ENCODE measurements at regions of chr2 and their contacts with region 1.

Region 1: DNA sequence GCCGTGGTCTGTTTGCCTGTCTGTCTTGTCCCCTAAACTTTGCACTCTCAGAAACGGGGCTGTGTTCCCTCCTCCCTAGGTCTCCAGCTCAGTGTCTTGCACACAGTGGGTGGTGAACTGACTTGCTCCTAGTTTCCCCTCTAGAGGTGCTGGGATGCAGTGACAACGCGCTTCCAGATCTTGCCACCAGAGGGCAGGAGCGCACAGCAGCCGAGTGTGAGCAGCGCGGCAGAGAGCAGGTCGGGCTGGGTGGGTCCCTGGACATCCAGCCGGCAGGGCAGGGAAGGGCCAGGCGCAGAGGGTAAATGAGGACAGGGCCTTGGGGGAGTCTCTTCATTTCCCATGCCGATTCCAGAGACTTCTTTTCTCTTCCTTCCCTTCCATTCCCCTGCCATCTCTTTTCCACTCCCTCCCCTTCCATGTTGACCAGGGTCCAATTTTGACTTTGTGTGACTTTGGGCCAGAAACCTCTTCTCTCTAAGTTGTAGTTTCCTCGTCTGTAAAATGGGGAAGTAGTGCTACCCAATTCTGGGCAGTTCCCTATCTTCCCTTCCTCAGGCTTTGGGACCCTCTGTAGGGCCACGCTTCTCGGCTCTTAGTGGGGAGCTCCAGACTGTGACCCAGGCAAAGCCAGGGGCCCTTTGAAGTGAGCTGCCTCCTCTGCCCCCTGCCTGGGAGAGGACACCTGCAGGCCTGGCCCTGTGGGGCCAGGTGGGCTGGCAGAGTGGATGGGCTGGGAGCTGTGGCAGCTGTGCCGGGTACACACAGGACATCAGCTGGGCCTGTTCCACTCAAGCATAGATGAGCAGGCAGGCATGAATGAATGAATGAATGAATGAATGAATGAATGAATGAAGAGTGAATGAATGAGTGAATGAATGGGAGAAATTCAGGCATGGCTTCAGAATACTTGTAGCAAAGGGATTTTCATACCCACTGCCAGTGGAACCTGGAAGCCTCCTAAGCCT is 43.3 kb upstream of the TAF1B start:
- DNase-seq: peak; percentile 91
- ATAC-seq: peak; percentile 96
- H3K4me3 Mint-ChIP-seq: peak overlapping the region; percentile 60
- H3K27ac Mint-ChIP-seq: peak overlapping the region; percentile 88
- H3K4me1 Mint-ChIP-seq: peaks cover 38% of the 10 kb centered on the region
- H3K27me3 Mint-ChIP-seq: peaks cover 4% of the 10 kb centered on the region

Region 2: GRCh38 chr2:9717886-9718451 is 82.0 kb before region 1 on chr2:
- CTCF ChIA-PET with region 1: no interaction called
- POLR2A ChIA-PET with region 1: no interaction called
- DNase-seq: no peak
- ATAC-seq: no peak
- H3K4me3 Mint-ChIP-seq: no peak overlapping the region
- H3K27ac Mint-ChIP-seq: no peak overlapping the region
- H3K4me1 Mint-ChIP-seq: no peaks in the 10 kb centered on the region
- H3K27me3 Mint-ChIP-seq: no peaks in the 10 kb centered on the region

Region 3: GRCh38 chr2:9770308-9771100 is 29.4 kb before region 1 on chr2:
- CTCF ChIA-PET with region 1: interaction called, 65 read pairs
- POLR2A ChIA-PET with region 1: interaction called, 3 read pairs
- DNase-seq: peak; percentile 69
- ATAC-seq: peak; percentile 69
- H3K4me3 Mint-ChIP-seq: no peak overlapping the region
- H3K27ac Mint-ChIP-seq: peak overlapping the region; percentile 60
- H3K4me1 Mint-ChIP-seq: peaks cover 9% of the 10 kb centered on the region
- H3K27me3 Mint-ChIP-seq: peaks cover 8% of the 10 kb centered on the region

Region 4: GRCh38 chr2:9778012-9778411 is 21.9 kb before region 1 on chr2:
- CTCF ChIA-PET with region 1: interaction called, 65 read pairs
- POLR2A ChIA-PET with region 1: interaction called, 4 read pairs
- DNase-seq: no peak
- ATAC-seq: no peak
- H3K4me3 Mint-ChIP-seq: no peak overlapping the region
- H3K27ac Mint-ChIP-seq: peak overlapping the region; percentile 71
- H3K4me1 Mint-ChIP-seq: peaks cover 49% of the 10 kb centered on the region
- H3K27me3 Mint-ChIP-seq: peaks cover 4% of the 10 kb centered on the region

Region 5: DNA sequence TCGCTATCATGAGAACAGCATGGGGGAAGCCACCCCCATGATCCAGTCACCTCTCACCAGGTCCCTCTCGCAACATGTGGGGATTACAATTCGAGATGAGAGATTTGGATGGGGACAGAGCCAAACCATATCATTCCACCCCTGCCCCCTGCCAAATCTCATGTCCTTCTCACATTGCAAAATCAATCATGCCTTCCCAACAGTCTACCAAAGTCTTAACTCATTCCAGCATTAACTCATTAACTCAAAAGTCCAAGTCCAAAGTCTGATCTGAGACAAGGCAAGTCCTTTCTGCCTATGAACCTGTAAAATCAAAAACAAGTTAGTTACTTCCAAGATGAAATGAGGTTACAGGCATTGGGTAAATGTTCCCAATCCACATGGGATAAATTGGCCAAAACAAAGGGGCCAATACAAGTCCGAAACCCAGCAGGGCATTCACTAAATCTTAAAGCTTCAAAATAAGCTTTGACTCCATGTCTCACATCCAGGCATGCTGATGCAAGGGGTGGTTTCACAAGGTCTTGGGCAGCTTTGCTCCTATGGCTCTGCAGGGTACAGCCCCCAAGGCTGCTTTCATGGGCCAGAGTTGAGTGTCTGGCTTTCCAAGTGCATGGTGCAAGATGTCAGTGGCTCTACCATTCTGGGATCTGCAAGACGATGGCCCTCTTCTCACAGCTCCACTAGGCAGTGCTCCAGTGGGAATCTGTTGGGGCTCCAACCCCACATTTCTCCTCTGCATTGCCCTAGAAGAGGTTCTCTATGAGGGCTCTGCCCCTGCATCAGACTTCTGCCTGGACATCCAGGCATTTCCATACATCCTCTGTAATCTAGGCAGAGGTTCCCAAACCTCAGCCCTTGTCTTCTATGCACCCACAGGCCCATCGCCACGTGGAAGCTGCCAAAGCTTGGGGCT is 58.1 kb after region 1 on chr2:
- CTCF ChIA-PET with region 1: no interaction called
- POLR2A ChIA-PET with region 1: no interaction called
- DNase-seq: no peak
- ATAC-seq: no peak
- H3K4me3 Mint-ChIP-seq: no peak overlapping the region
- H3K27ac Mint-ChIP-seq: no peak overlapping the region
- H3K4me1 Mint-ChIP-seq: no peaks in the 10 kb centered on the region
- H3K27me3 Mint-ChIP-seq: no peaks in the 10 kb centered on the region

Measured in activated CD8-positive, alpha-beta T cell treated with anti-CD3 and anti-CD28 coated beads, Interleukin-2, amount 10 ng/mL, durations not matched to agents 7 days and 5 days (primary cell).